ENCODE measurements at regions of chr1 and their contacts with region 1.

Region 1: GRCh38 chr1:153365303-153366095 is 7.8 kb downstream of the S100A9 start:
- DNase-seq: no peak

Region 2: DNA sequence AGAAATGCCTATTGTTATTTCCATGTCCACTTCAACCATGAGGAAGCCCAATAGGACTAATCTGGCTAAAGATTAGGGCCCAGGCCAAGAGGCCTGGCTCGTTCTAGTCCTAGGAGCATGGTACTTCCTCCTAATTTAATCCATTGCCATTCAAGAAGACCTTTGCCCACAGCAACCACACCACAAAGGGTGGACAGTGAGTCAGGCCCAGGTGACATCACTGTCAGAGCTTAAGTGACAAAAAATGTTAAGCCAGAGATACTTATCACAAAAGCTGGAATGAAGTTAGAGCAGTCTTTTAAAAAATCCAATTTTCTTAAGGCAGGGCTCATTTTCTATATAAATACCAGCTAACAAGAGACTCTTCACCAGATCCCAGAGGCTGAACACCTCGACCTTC is 364.1 kb before region 1 on chr1 and contains the start of gene SPRR3:
- in situ Hi-C with region 1: no loop called
- DNase-seq: no peak
- total RNA-seq, gene SPRR3: not detected in 2 replicates

Region 3: DNA sequence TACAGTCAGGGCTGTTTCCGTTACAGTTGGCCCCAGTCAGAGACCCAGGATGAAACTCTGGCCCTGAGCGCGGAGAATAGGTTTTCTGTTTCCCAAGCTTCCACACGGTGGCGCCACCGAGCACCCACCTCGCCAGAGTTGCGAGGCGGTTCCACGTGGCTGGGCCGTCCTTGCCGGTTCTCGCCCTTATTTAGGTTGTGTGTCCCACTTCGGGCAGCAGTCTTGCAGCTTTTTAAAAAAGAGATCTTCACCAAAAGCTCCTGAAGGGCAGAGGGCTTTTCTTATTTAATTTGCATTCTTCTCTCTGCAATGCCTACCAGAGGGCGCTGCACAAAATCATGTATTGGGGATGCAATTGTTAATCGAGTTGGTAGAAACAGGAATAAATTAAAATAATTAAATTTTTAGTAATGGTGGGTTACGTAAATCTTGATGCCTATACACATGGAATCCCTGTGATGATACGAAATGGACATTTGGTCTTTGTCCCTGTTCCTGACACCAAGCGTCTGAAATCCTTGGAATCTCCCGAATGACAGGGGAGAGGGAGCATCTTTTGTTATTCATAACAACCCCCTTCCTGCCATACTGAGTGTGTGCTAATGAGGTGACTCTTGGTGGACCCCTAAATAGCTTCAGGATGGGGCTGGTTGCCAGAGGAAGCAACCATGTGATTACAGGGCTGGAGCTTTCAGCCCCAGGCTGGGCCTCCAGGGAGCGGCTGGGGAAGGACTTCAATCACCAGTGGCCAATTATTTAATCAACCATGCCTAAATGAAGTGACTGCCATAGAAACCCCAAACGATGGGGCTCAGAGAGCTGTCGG is 100.5 kb after region 1 on chr1:
- in situ Hi-C with region 1: loop called (anchors 10 kb)
- DNase-seq: peak; percentile 67